ENCODE measurements at regions of chr1 and their contacts with region 1.

Region 1: DNA sequence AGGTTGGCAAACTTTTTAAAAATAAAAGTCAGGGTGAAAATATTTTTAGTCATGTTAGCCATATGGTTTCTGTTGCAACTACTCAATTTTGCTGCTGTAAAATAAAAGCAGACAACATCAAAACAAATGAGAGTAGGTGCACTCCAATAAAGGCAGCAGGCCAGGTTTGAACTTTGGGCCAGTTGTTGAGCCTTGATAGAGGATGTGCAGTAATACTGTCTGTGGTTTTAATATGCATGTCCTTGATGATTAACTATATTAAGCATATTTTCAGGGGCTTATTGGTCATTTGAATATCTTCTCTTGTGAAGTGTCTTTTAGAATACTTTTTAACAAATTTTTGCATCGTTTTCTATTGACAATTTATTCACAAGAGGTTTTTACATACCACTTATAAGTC is 1399.9 kb upstream of the B3GALT2 start:
- DNase-seq: peak; percentile 50
- ATAC-seq: peak; percentile 60
- H3K4me3 ChIP-seq: no peak overlapping the region
- H3K27ac ChIP-seq: 0 out of 2 replicates have a peak overlapping the region, but pooled peaks have one; percentile 9
- H3K4me1 ChIP-seq: peaks cover 10% of the 10 kb centered on the region; the same call in 1 of the 2 replicates
- H3K27me3 ChIP-seq: no peaks in the 10 kb centered on the region
- CTCF ChIP-seq: no peak

Region 2: GRCh38 chr1:194512957-194513356 is 73.3 kb before region 1 on chr1:
- CTCF ChIA-PET with region 1: no interaction called
- POLR2A ChIA-PET with region 1: no interaction called
- intact Hi-C with region 1: no loop called
- DNase-seq: no peak
- ATAC-seq: no peak
- H3K4me3 ChIP-seq: no peak overlapping the region
- H3K27ac ChIP-seq: no peak overlapping the region
- H3K4me1 ChIP-seq: no peaks in the 10 kb centered on the region
- H3K27me3 ChIP-seq: no peaks in the 10 kb centered on the region
- CTCF ChIP-seq: no peak

Region 3: DNA sequence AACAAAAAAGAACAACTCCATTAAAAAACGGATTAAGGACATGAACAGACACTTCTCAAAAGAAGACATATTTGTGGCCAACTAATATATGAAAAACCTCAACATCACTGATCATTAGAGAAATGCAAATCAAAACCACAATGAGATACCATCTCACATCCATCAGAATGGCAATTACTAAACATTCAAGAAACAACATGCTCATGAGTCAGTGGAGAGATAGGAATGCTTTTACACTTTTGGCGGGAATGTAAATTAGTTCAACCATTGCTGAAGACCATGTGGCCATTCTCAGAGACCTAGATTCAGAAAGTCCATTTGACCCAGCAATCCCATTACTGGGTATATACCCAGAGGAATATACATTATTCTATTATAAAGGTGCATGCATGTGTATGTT is 42.7 kb after region 1 on chr1:
- CTCF ChIA-PET with region 1: no interaction called
- POLR2A ChIA-PET with region 1: no interaction called
- intact Hi-C with region 1: no loop called
- DNase-seq: no peak
- ATAC-seq: no peak
- H3K4me3 ChIP-seq: no peak overlapping the region
- H3K27ac ChIP-seq: no peak overlapping the region
- H3K4me1 ChIP-seq: no peaks in the 10 kb centered on the region
- H3K27me3 ChIP-seq: no peaks in the 10 kb centered on the region
- CTCF ChIP-seq: no peak

Region 4: GRCh38 chr1:194658090-194658439 is 71.8 kb after region 1 on chr1:
- CTCF ChIA-PET with region 1: no interaction called
- POLR2A ChIA-PET with region 1: no interaction called
- intact Hi-C with region 1: loop called (anchors 5 kb)
- DNase-seq: peak; percentile 78
- ATAC-seq: peak; percentile 99
- H3K4me3 ChIP-seq: no peak overlapping the region
- H3K27ac ChIP-seq: no peak overlapping the region
- H3K4me1 ChIP-seq: peaks cover 8% of the 10 kb centered on the region
- H3K27me3 ChIP-seq: no peaks in the 10 kb centered on the region
- CTCF ChIP-seq: no peak

Region 5: GRCh38 chr1:194698908-194699318 is 112.6 kb after region 1 on chr1:
- CTCF ChIA-PET with region 1: no interaction called
- POLR2A ChIA-PET with region 1: no interaction called
- intact Hi-C with region 1: no loop called
- DNase-seq: no peak
- ATAC-seq: no peak
- H3K4me3 ChIP-seq: no peak overlapping the region
- H3K27ac ChIP-seq: no peak overlapping the region
- H3K4me1 ChIP-seq: no peaks in the 10 kb centered on the region
- H3K27me3 ChIP-seq: no peaks in the 10 kb centered on the region
- CTCF ChIP-seq: no peak

Region 6: GRCh38 chr1:194723067-194723466 is 136.8 kb after region 1 on chr1:
- CTCF ChIA-PET with region 1: no interaction called
- POLR2A ChIA-PET with region 1: no interaction called
- intact Hi-C with region 1: loop called (anchors 10 kb)
- DNase-seq: peak; percentile 47
- ATAC-seq: peak; percentile 55
- H3K4me3 ChIP-seq: no peak overlapping the region
- H3K27ac ChIP-seq: no peak overlapping the region
- H3K4me1 ChIP-seq: no peaks in the 10 kb centered on the region
- H3K27me3 ChIP-seq: no peaks in the 10 kb centered on the region
- CTCF ChIP-seq: no peak

Measured in PC-3 (cell line).